Posterior cingulate gyrus (tissue), 11 donors: ENCODE measurements at regions of chr7 and their contacts with region 1.

Region 1: DNA sequence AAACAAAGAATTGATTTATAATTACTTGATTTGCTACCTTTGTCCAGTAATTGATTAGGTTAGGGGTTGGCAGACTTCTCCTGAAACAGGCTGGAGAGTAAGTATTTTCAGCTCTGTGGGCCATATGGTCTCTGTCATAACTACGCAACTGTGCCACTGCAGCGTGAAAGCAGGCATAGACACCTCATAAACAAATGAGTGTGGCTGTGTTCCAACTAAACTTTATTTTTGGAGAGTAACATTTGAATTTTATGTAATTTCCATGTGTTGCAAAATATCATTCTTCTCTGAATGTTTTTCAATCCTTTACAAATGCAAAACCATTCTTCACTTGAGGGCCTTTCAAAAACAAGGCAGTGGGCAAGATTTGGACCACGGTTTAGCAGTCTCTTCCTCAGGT is 76.9 kb downstream of the GALNT17 start:
- DNase-seq: peak in 3 of 10 donors; percentile 22 to 69 (median 25)

Region 2: GRCh38 chr7:71145906-71146901 is 62.7 kb before region 1 on chr7:
- intact Hi-C with region 1: loop called (anchors 10 kb)
- DNase-seq: no peak